ENCODE measurements at regions of chr7 and their contacts with region 1.

Region 1: GRCh38 chr7:135274495-135275268 is 41.0 kb downstream of the STRA8 start:
- DNase-seq: peak; percentile 90
- H3K4me3 ChIP-seq: no peak overlapping the region
- H3K27ac ChIP-seq: no peak overlapping the region
- H3K4me1 ChIP-seq: no peaks in the 10 kb centered on the region
- H3K27me3 ChIP-seq: no peaks in the 10 kb centered on the region
- CTCF ChIP-seq: peak; percentile 75 to 93 (median 83)
- POLR2A ChIP-seq: no peak

Region 2: DNA sequence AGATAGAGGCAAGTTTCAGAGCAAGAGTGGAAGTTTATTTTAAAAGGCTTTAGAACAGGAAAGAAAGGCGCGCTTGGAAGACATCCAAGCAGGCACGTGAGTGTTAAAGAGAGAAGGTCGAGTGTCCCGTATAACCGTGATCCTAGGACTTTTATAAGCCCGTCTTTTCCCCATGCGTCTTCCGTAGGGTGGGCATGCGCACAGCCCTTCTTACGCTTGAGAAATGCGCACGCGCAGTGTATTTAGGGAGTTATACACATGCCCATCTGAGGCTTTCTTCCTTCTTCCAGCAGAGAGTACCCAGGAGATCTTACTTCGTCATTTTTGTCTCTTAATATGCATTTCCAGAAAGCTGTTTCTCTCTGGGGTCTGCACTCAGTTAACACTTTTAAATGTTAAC is 442.8 kb before region 1 on chr7:
- intact Hi-C with region 1: no loop called
- DNase-seq: peak; percentile 78
- H3K4me3 ChIP-seq: peak overlapping the region; percentile 7 to 36
- H3K27ac ChIP-seq: peak overlapping the region in 1 of 2 donors; percentile 18
- H3K4me1 ChIP-seq: peaks cover 8% of the 10 kb centered on the region
- H3K27me3 ChIP-seq: no peaks in the 10 kb centered on the region
- CTCF ChIP-seq: no peak
- POLR2A ChIP-seq: no peak

Region 3: GRCh38 chr7:135217645-135218509 is 56.8 kb before region 1 on chr7:
- intact Hi-C with region 1: no loop called
- DNase-seq: no peak
- H3K4me3 ChIP-seq: no peak overlapping the region
- H3K27ac ChIP-seq: no peak overlapping the region
- H3K4me1 ChIP-seq: no peaks in the 10 kb centered on the region
- H3K27me3 ChIP-seq: no peaks in the 10 kb centered on the region
- CTCF ChIP-seq: no peak
- POLR2A ChIP-seq: no peak

Region 4: GRCh38 chr7:135562743-135563142 is 288.1 kb after region 1 on chr7:
- intact Hi-C with region 1: loop called (anchors 10 kb)
- DNase-seq: no peak
- H3K4me3 ChIP-seq: no peak overlapping the region
- H3K27ac ChIP-seq: no peak overlapping the region
- H3K4me1 ChIP-seq: peaks cover 6% of the 10 kb centered on the region
- H3K27me3 ChIP-seq: no peaks in the 10 kb centered on the region
- CTCF ChIP-seq: no peak
- POLR2A ChIP-seq: no peak

Region 5: DNA sequence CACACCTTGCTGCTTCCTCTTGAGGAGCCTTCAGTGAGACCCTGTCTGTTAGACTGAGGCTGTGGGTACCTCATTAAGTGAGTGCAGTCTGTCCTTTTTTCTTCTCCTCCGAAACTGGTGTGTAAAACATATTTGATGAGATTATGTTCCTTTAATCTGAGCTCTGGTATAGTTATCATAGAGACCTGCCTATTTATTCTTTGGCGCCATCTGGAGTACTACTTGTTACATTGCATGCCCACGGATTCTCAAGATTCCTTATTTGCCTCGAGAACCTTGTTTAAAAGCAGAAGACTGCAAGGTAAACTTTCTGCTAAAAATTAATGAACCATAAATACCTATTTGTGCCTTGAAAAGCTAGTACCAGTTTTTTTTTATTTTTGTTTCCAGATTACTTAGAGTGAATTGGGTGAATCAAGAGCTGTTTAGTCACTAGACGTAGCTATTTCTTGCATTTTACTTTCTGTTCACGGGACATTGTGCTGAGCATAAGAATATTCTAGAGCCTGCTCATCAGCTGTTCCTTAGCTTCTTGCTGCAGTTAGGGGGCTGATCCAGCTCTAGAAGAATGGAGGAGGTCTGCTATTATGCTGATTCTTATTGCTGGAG is 370.7 kb after region 1 on chr7:
- intact Hi-C with region 1: loop called (anchors 10 kb)
- DNase-seq: peak; percentile 48
- H3K4me3 ChIP-seq: no peak overlapping the region
- H3K27ac ChIP-seq: peak overlapping the region; percentile 18 to 50
- H3K4me1 ChIP-seq: peaks cover 5% of the 10 kb centered on the region
- H3K27me3 ChIP-seq: no peaks in the 10 kb centered on the region
- CTCF ChIP-seq: peak; percentile 58 to 80 (median 64)
- POLR2A ChIP-seq: no peak